T-cell (primary cell): ENCODE measurements at regions of chr14 and their contacts with region 1.

Region 1: DNA sequence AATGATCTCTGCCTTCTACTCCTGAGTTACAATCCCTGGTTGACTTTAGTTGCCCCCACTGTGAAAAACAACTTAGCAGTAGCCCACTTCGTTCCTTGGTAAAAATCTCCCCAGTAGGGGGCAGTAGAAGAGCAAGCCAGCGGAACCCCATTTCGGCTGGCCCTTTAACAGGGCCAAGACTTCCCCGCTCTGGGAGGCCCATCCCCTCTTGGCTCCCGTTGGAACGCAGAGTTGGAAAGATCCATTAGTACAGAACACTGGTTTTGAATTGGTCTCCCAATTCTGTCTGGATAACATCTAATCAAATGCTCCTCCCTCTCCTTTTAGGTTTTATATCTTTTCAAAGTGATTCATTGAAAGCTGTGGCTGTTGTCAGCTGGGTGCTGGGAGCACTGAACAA is 1133.3 kb downstream of the BCL11B start:
- DNase-seq: peak; percentile 31 to 89 (median 57)
- ATAC-seq: peak; percentile 55 to 60 (median 56)
- H3K4me3 ChIP-seq: peak overlapping the region in 1 of 2 donors; percentile 5
- H3K4me3 Mint-ChIP-seq: peak overlapping the region; percentile 58 to 88 (median 79)
- H3K27ac ChIP-seq: peak overlapping the region; percentile 55
- H3K27ac Mint-ChIP-seq: peak overlapping the region; percentile 92 to 97
- H3K4me1 ChIP-seq: peaks cover 63 to 78% of the 10 kb centered on the region in 2 experiments
- H3K4me1 Mint-ChIP-seq: peaks cover 88 to 95% (median 95%) of the 10 kb centered on the region in 3 donors
- H3K27me3 ChIP-seq: no peaks in the 10 kb centered on the region
- H3K27me3 Mint-ChIP-seq: no peaks in the 10 kb centered on the region

Region 2: GRCh38 chr14:97978341-97978740 is 160.3 kb before region 1 on chr14:
- CTCF ChIA-PET with region 1: interaction called in 1 of 2 experiments, 12 read pairs
- POLR2A ChIA-PET with region 1: no interaction called
- DNase-seq: peak; percentile 45 to 86 (median 62)
- ATAC-seq: peak; percentile 75 to 81 (median 78)
- H3K4me3 ChIP-seq: peak overlapping the region; percentile 69 to 88
- H3K4me3 Mint-ChIP-seq: peak overlapping the region; percentile 92 to 94 (median 94)
- H3K27ac ChIP-seq: peak overlapping the region; percentile 88
- H3K27ac Mint-ChIP-seq: peak overlapping the region; percentile 95 to 97
- H3K4me1 ChIP-seq: peaks cover 36 to 39% of the 10 kb centered on the region in 2 experiments
- H3K4me1 Mint-ChIP-seq: peaks cover 53 to 65% (median 60%) of the 10 kb centered on the region in 3 donors
- H3K27me3 ChIP-seq: no peaks in the 10 kb centered on the region
- H3K27me3 Mint-ChIP-seq: no peaks in the 10 kb centered on the region

Region 3: DNA sequence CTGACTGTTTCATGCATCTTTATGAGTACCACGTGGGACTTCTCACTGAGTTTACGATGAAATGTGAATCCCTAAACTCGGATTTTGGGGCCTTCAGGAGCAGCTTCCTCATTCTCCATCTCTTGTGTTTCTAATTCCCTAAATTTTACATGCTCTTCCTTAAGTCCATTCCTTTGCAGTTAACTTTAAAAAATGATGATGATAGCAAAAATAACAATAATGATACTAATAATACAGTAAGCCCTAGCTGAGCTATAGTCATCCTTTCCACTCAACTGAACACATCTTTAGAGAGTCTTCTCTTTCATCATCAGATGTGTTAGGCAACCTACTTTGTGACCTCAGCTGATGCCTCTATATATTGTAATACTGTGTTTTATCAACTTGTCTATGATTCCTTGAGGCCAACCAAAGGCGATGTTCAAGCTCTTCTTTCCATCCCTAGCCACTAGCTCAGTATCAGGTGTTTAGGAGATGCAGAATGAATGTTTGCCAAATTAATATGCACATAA is 145.1 kb before region 1 on chr14:
- CTCF ChIA-PET with region 1: no interaction called
- POLR2A ChIA-PET with region 1: interaction called in 1 of 2 experiments, 10 read pairs
- DNase-seq: no peak
- ATAC-seq: peak; percentile 14 to 31 (median 28)
- H3K4me3 ChIP-seq: no peak overlapping the region
- H3K4me3 Mint-ChIP-seq: peak overlapping the region; percentile 39 to 62 (median 53)
- H3K27ac ChIP-seq: peak overlapping the region; percentile 86
- H3K27ac Mint-ChIP-seq: peak overlapping the region; percentile 95 to 98
- H3K4me1 ChIP-seq: peaks cover 36 to 52% of the 10 kb centered on the region in 2 experiments
- H3K4me1 Mint-ChIP-seq: peaks cover 75 to 79% (median 78%) of the 10 kb centered on the region in 3 donors
- H3K27me3 ChIP-seq: no peaks in the 10 kb centered on the region
- H3K27me3 Mint-ChIP-seq: no peaks in the 10 kb centered on the region

Region 4: DNA sequence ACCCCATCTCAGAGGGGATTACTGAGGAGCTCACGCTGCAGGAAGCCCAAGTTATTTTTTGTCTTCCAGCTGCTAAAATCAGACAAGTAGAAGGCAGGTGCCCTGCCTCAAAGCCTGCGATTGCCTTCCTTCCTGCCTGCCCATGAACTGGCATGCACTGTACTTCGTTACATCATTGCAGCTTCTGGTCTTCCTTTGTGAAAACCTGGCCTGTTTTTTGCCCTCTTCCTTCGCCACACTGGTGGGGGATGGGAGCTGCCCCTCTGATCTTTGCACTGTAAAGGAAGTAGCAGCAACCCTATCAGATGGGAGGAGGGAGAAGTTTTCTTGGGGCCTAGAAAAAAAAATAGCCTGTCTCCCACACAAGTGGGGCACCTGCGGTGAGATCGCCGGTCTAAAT is 34.6 kb after region 1 on chr14:
- CTCF ChIA-PET with region 1: interaction called, 3 to 11 read pairs
- POLR2A ChIA-PET with region 1: interaction called in 1 of 2 experiments, 4 read pairs
- DNase-seq: peak; percentile 51 to 86 (median 70)
- ATAC-seq: peak; percentile 74 to 83 (median 82)
- H3K4me3 ChIP-seq: peak overlapping the region; percentile 4 to 57
- H3K4me3 Mint-ChIP-seq: peak overlapping the region; percentile 61 to 80 (median 67)
- H3K27ac ChIP-seq: peak overlapping the region; percentile 80
- H3K27ac Mint-ChIP-seq: peak overlapping the region; percentile 96 to 99
- H3K4me1 ChIP-seq: peaks cover 89 to 95% of the 10 kb centered on the region in 2 experiments
- H3K4me1 Mint-ChIP-seq: peaks cover 99 to 100% (median 100%) of the 10 kb centered on the region in 3 donors
- H3K27me3 ChIP-seq: no peaks in the 10 kb centered on the region
- H3K27me3 Mint-ChIP-seq: no peaks in the 10 kb centered on the region